Head of caudate nucleus (tissue), 42 donors: ENCODE measurements at regions of chr5 and their contacts with region 1.

Region 1: GRCh38 chr5:55146543-55147151 is 13.3 kb upstream of the GPX8 start:
- DNase-seq: peak; percentile 26 to 91 (median 76)

Region 2: DNA sequence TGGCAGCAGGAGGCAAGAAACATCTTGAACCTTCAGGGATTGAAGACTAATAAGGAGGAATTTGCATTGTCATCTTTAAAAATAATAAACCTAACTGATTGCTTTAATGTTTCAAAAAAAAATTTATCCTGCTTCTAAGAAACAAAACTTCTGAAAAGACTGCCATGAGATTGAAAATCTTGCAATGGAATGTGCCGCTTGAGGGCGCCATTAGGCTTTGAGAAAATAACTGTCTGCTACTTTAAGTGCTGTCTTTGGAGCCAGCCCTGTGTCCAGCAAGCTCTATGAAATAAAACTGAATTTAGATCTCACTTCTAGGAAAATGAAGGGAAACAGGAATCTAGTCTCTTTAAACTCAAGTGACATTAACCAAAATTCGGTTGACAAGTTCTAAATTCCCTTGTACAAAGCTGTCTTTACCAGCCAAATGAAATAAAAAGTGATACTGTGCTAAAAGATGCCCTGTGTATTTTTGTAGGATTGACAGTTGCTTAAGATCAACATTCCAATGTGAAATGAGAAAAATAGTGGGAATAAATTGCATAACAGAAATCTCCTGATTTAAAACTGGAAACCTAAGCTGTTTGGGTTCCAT is 240.6 kb before region 1 on chr5:
- intact Hi-C with region 1: loop called (anchors 10 kb)
- DNase-seq: peak; percentile 13 to 87 (median 68)